ENCODE measurements at regions of chr1 and their contacts with region 1.

Region 1: GRCh38 chr1:196732526-196732925 is 42.1 kb upstream of the CFHR3 start:
- DNase-seq: no peak
- ATAC-seq: no peak
- H3K4me3 ChIP-seq: no peak overlapping the region
- H3K4me3 Mint-ChIP-seq: no peak overlapping the region
- H3K27ac ChIP-seq: no peak overlapping the region
- H3K27ac Mint-ChIP-seq: no peak overlapping the region
- H3K4me1 ChIP-seq: no peaks in the 10 kb centered on the region
- H3K4me1 Mint-ChIP-seq: no peaks in the 10 kb centered on the region
- H3K27me3 ChIP-seq: no peaks in the 10 kb centered on the region
- H3K27me3 Mint-ChIP-seq: no peaks in the 10 kb centered on the region

Region 2: GRCh38 chr1:196690611-196691010 is 41.9 kb before region 1 on chr1:
- CTCF ChIA-PET with region 1: no interaction called
- POLR2A ChIA-PET with region 1: no interaction called
- intact Hi-C with region 1: no loop called
- DNase-seq: no peak
- ATAC-seq: no peak
- H3K4me3 ChIP-seq: no peak overlapping the region
- H3K4me3 Mint-ChIP-seq: no peak overlapping the region
- H3K27ac ChIP-seq: no peak overlapping the region
- H3K27ac Mint-ChIP-seq: no peak overlapping the region
- H3K4me1 ChIP-seq: no peaks in the 10 kb centered on the region
- H3K4me1 Mint-ChIP-seq: no peaks in the 10 kb centered on the region
- H3K27me3 ChIP-seq: no peaks in the 10 kb centered on the region
- H3K27me3 Mint-ChIP-seq: no peaks in the 10 kb centered on the region

Region 3: DNA sequence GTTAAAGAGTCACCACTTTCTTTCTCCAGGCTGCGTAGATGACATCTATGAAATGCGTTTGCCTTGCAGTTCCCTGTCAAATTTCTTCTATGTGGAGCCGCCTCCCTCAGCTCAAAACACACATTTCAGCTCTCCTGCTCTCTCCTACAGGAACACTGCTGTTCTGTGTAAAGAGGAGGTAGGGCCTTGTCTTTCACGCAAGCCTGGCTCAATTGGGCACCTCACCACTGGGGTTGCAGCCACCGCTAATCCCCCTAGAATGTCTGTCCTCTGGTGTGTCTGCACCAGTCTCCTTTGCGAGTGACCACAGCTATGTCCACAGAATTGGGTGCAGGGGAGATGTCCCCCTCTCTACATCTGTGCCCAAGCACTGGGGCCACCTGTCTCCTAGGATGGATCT is 123.5 kb after region 1 on chr1:
- CTCF ChIA-PET with region 1: no interaction called
- POLR2A ChIA-PET with region 1: no interaction called
- intact Hi-C with region 1: loop called in 1 of 2 experiments (anchors 10 kb)
- DNase-seq: no peak
- ATAC-seq: no peak
- H3K4me3 ChIP-seq: no peak overlapping the region
- H3K4me3 Mint-ChIP-seq: no peak overlapping the region
- H3K27ac ChIP-seq: no peak overlapping the region
- H3K27ac Mint-ChIP-seq: no peak overlapping the region
- H3K4me1 ChIP-seq: no peaks in the 10 kb centered on the region
- H3K4me1 Mint-ChIP-seq: no peaks in the 10 kb centered on the region
- H3K27me3 ChIP-seq: no peaks in the 10 kb centered on the region
- H3K27me3 Mint-ChIP-seq: no peaks in the 10 kb centered on the region